Heart right ventricle (tissue), 16 donors: ENCODE measurements at regions of chr10 and their contacts with region 1.

Region 1: DNA sequence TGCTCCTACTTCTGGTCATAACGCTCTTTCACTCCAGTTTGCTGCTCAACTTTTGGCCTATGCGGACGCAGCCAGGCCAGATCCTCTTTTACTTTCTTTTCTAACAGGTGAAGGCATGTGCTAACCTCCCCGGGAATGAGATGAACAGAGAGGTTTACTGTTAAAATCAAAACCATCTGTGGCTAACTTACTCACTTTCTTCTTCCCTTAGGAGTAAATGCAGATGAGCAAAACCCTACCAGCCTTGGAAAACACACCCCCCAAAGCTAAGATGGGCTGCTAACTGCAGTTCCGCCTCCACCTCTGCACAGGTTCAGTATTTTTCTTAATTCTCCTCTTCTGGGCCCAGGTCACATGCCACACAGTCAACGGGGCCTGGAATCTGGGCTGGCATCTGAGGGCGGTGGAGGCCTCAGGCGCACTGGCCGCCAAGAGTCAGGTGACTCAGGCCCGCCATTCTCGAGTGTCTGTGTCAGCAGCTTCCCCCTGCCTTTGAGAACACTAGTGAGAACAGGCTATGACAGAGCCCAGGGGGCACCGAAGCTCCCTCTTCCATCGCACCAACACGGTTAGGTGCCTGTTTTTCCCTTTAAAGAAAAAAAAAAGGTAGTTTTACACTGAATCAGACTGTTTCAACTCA is 11.1 kb downstream of the FAM53B start:
- DNase-seq: peak in 1 of 2 donors; percentile 57
- ATAC-seq: peak; percentile 30 to 59 (median 45)
- H3K4me3 ChIP-seq: peak overlapping the region in 2 of 10 donors; percentile 4 to 7
- H3K27ac ChIP-seq: peak overlapping the region; percentile 67 to 85 (median 80)
- H3K4me1 ChIP-seq: peaks cover 60 to 100% (median 98%) of the 10 kb centered on the region in 9 donors
- H3K27me3 ChIP-seq: no peaks in the 10 kb centered on the region
- CTCF ChIP-seq: no peak

Region 2: DNA sequence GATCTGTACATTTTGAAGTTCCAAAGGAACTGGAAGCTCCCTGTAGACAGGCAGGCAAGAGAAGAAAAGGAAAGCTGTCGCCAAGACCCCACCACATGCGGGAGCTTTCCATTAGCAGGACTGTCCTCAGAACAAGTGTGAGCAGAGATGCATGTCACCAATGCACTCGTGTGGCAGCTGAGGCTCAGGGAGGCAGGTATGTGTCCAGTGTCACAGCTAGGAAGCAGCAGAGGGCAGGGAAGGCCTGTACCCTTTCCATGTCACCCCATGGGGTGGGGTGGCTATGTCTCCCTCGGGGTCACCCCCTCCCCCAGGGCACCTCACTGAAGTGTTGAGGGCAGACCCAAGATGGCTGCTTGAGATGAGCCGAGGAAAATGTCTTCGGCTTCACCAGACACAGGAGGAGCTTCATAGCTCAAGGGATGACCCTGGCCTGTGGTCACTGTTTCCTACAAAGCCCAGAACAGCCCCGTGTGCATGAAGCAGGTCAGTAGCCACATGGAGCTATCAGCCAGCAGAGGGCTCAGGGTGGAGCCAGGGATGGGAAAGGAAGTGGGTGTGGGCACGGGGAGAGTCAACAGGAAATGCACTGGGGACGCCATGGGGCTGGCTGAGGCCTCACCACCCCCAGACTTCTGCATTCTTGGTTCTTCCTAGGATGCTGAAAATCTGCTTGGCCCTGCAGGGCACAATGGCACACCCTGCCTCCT is 85.5 kb before region 1 on chr10:
- intact Hi-C with region 1: loop called in 2 of 10 experiments (anchors 5 kb)
- DNase-seq: peak; percentile 64 to 65
- ATAC-seq: peak in 7 of 8 donors; percentile 25 to 76 (median 55)
- H3K4me3 ChIP-seq: no peak overlapping the region
- H3K27ac ChIP-seq: peak overlapping the region; percentile 46 to 91 (median 78)
- H3K4me1 ChIP-seq: peaks cover 72 to 100% (median 99%) of the 10 kb centered on the region in 9 donors
- H3K27me3 ChIP-seq: no peaks in the 10 kb centered on the region
- CTCF ChIP-seq: peak in 6 of 9 donors; percentile 16 to 52 (median 32)

Region 3: GRCh38 chr10:124688889-124689670 is 44.0 kb before region 1 on chr10:
- intact Hi-C with region 1: loop called in 2 of 10 experiments (anchors 10 kb)
- DNase-seq: no peak
- ATAC-seq: peak in 3 of 8 donors; percentile 13 to 53 (median 43)
- H3K4me3 ChIP-seq: no peak overlapping the region
- H3K27ac ChIP-seq: peak overlapping the region in 9 of 10 donors; percentile 18 to 87 (median 56)
- H3K4me1 ChIP-seq: peaks cover 31 to 100% (median 89%) of the 10 kb centered on the region in 9 donors
- H3K27me3 ChIP-seq: no peaks in the 10 kb centered on the region
- CTCF ChIP-seq: no peak

Region 4: DNA sequence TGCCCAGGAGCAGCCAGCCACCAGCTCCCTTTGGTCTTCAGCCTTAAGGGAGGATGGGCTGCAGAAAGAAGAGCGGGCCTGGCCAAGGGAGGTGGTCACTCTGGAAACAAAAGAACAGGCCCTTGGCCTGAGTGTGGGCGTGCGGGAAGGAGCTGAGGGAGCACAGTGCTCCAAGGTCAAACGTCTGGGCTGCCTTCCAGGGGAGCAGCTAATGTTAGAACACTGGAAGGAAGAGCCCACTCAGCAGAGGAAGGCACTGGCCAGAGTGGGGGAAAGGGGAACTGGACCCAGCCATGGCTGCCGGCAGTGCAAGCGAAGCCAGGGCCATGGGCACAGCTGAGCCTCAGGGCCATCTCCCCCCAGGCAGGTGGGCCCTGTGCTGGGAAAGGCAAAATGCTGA is 31.6 kb before region 1 on chr10:
- intact Hi-C with region 1: loop called in 3 of 10 experiments (anchors 2 to 5 kb)
- DNase-seq: peak; percentile 92 to 97
- ATAC-seq: peak; percentile 86 to 91 (median 88)
- H3K4me3 ChIP-seq: no peak overlapping the region
- H3K27ac ChIP-seq: peak overlapping the region; percentile 74 to 98 (median 91)
- H3K4me1 ChIP-seq: peaks cover 72 to 100% (median 97%) of the 10 kb centered on the region in 9 donors
- H3K27me3 ChIP-seq: no peaks in the 10 kb centered on the region
- CTCF ChIP-seq: peak in 3 of 9 donors; percentile 9 to 30 (median 12)

Region 5: GRCh38 chr10:124842721-124843120 is 109.7 kb after region 1 on chr10:
- intact Hi-C with region 1: no loop called
- DNase-seq: no peak
- ATAC-seq: no peak
- H3K4me3 ChIP-seq: no peak overlapping the region
- H3K27ac ChIP-seq: no peak overlapping the region
- H3K4me1 ChIP-seq: no peaks in the 10 kb centered on the region
- H3K27me3 ChIP-seq: no peaks in the 10 kb centered on the region
- CTCF ChIP-seq: no peak

Region 6: GRCh38 chr10:124935946-124936345 is 202.9 kb after region 1 on chr10:
- intact Hi-C with region 1: no loop called
- DNase-seq: no peak
- ATAC-seq: no peak
- H3K4me3 ChIP-seq: no peak overlapping the region
- H3K27ac ChIP-seq: no peak overlapping the region
- H3K4me1 ChIP-seq: peaks cover 0 to 50% (median 30%) of the 10 kb centered on the region in 9 donors
- H3K27me3 ChIP-seq: no peaks in the 10 kb centered on the region
- CTCF ChIP-seq: no peak